ENCODE measurements at regions of chr5 and their contacts with region 1.

Region 1: GRCh38 chr5:159106569-159107282 is 7.0 kb upstream of the EBF1 start:
- DNase-seq: peak; percentile 73
- H3K4me3 ChIP-seq: peak overlapping the region; percentile 34
- H3K27ac ChIP-seq: no peak overlapping the region
- H3K4me1 ChIP-seq: no peaks in the 10 kb centered on the region
- H3K27me3 ChIP-seq: peaks cover 16% of the 10 kb centered on the region
- CTCF ChIP-seq: peak; percentile 89

Region 2: GRCh38 chr5:158013939-158014338 is 1092.8 kb before region 1 on chr5:
- CTCF ChIA-PET with region 1: no interaction called
- POLR2A ChIA-PET with region 1: no interaction called
- intact Hi-C with region 1: loop called (anchors 10 kb)
- DNase-seq: peak; percentile 50
- H3K4me3 ChIP-seq: no peak overlapping the region
- H3K27ac ChIP-seq: no peak overlapping the region
- H3K4me1 ChIP-seq: no peaks in the 10 kb centered on the region
- H3K27me3 ChIP-seq: no peaks in the 10 kb centered on the region
- CTCF ChIP-seq: peak; percentile 64

Region 3: DNA sequence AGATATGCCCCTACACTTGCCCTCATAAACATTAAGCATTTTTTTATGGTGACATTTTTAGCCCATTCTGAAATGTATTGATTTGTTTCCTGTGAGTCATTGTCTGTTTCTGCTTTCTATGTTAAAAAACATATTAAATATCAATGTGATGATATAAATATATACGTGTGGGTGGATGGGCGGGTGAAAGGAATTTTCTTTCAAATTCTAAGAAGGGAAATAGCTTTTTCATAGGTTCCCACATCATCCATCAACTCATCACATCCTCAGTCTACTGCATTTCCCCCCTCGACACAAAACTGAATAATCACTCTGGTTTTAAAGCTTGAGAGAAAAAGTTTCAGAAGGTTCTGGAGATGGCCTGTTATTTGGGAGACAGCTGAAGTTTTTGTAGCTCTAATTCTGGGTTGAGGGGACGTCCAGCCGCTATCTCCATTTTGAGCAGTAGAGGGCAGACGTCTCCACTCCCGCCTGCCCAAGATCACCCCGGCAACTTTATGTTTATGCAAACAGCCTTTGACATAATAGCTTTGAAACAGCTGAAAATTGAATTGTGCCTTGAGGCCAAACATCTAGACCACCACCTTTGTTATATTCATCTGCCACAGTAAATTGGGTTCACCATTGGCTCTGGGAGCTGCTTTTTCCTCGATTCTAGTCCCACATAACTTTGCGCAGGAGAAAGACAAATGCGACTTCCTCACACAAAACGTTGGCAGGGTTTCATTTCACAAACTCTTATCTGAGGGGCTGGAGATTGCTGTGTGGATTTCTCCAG is 1031.5 kb before region 1 on chr5:
- CTCF ChIA-PET with region 1: interaction called, 12 read pairs
- POLR2A ChIA-PET with region 1: no interaction called
- intact Hi-C with region 1: loop called (anchors 1 kb)
- DNase-seq: peak; percentile 63
- H3K4me3 ChIP-seq: no peak overlapping the region
- H3K27ac ChIP-seq: no peak overlapping the region
- H3K4me1 ChIP-seq: no peaks in the 10 kb centered on the region
- H3K27me3 ChIP-seq: no peaks in the 10 kb centered on the region
- CTCF ChIP-seq: peak; percentile 79

Region 4: GRCh38 chr5:158695595-158696330 is 411.0 kb before region 1 on chr5:
- CTCF ChIA-PET with region 1: interaction called, 47 read pairs
- POLR2A ChIA-PET with region 1: no interaction called
- intact Hi-C with region 1: loop called (anchors 1 kb)
- DNase-seq: peak; percentile 81
- H3K4me3 ChIP-seq: no peak overlapping the region
- H3K27ac ChIP-seq: no peak overlapping the region
- H3K4me1 ChIP-seq: no peaks in the 10 kb centered on the region
- H3K27me3 ChIP-seq: no peaks in the 10 kb centered on the region
- CTCF ChIP-seq: peak; percentile 94

Region 5: GRCh38 chr5:158852622-158853021 is 254.1 kb before region 1 on chr5:
- CTCF ChIA-PET with region 1: no interaction called
- POLR2A ChIA-PET with region 1: no interaction called
- intact Hi-C with region 1: loop called (anchors 10 kb)
- DNase-seq: no peak
- H3K4me3 ChIP-seq: no peak overlapping the region
- H3K27ac ChIP-seq: no peak overlapping the region
- H3K4me1 ChIP-seq: no peaks in the 10 kb centered on the region
- H3K27me3 ChIP-seq: no peaks in the 10 kb centered on the region
- CTCF ChIP-seq: no peak

Region 6: DNA sequence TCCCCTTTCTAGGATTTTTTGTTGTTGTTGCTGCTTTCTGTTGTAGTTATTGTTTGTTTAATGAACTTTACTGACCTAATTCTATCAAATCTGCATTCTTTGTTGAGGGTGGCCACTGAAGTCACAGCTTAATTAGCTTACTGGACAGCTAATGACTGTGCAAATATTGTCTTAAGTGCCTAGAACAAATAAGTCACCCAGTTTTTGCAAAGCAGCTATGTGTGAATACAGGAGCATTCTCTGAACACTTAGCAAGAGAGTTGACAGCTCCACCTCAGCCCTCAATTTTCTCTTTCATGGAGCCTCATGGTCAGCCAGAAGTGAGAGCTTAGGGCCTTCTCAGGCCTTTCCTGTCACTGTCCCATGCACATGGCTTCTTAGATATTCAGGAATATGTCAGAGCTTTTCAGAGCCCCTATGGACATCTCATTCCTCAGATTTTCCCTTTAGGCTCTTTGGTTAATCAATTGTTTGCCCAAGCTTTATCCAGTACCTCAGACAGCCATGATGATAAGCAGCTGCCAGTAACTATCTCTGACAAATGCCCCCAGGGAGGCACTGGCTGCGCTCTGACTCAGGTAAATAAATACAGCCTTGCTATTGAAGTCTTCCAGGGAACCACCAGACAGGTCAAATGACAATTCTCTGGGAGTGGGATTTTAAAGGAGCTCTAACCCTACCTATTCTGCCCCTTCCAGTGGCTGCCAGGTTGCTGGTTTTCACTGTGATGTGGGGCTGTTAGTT is 464.9 kb after region 1 on chr5:
- CTCF ChIA-PET with region 1: no interaction called
- POLR2A ChIA-PET with region 1: no interaction called
- intact Hi-C with region 1: no loop called
- DNase-seq: no peak
- H3K4me3 ChIP-seq: no peak overlapping the region
- H3K27ac ChIP-seq: no peak overlapping the region
- H3K4me1 ChIP-seq: no peaks in the 10 kb centered on the region
- H3K27me3 ChIP-seq: no peaks in the 10 kb centered on the region
- CTCF ChIP-seq: no peak